Lower leg skin (tissue), 4 donors: ENCODE measurements at regions of chr1 and their contacts with region 1.

Region 1: DNA sequence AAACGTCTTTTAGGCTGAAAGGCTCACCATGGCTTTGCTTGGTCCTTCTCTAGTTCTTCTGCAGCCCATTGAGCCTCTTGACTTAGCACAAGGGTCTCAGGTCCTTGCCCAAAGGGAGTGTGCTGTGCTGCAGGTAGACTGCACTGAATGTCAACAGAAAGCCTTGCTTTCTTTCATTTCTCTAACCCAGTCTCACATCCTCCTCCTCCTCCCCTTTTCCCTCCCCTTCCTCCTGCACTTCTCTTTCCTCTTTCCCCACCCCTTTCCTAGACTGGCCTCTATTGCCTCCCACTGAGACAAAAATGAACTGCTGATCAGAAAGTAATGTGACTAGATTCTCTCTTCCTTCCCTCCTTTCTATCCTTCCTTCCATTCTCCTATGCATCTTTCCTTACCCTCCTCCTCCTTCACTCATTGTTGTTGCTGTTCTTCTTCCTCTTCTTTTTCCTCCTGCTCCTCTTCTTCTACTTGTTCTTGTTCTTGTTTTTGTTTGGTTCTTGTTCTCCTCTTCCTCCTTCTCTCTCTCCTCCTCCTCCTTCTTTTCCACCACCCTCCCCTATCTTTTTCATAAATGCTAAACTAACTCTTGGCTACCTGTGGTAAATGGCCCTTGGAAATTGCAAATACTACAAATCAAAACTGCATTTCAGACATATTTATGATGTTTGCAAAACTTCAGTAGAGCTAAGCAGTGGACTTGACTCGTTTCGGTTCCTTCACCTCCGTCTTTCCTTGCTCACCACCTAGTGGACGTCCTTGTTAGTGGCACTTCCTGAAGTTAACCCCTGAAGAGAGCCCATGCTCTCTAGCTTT is at the start of gene SELL:
- DNase-seq: peak; percentile 41 to 86
- H3K4me3 ChIP-seq: no peak within 1 kb of the TSS
- CTCF ChIP-seq: peak in 1 of 3 donors; percentile 19
- POLR2A ChIP-seq: no peak
- total RNA-seq, gene SELL: 0.10 to 0.36 TPM in 2 of 4 donors, not detected in the others

Region 2: DNA sequence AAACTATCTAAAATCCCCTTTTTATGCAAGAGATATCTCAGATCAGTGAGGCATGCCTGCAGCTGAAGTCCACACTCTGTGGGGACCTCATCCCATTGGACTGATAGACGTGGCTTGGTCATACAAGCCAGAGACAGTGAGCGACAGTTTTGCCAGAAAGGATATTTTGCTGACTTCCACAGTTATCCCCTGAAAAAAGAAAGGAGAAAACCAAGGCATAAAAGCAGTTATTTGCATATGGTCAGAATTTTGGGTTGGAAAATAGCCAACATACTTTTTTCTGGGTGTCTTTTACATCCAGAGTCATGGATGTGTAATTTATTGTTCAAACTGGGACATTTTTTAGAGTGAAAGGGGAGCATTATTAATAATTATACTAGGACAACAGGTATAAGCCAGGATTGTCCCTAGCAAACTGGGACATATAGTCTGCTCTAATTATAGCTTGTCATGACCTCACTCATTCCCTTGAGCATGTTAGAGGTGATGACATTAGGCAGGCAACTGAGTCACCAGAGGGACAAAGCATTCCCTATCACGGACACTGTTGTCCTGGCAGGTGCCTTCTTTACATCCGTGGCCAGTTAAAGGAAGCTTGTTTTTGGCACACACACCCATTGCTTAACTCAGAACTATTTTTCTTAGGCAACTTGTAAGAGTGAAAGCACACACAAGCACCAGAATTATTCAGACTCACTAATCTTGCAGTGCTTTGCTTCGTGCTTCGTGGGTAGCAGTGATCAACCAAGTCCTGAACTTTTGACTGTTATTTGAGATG is 1017.7 kb after region 1 on chr1:
- intact Hi-C with region 1: loop called (anchors 5 kb)
- DNase-seq: no peak
- H3K4me3 ChIP-seq: no peak overlapping the region
- CTCF ChIP-seq: no peak
- POLR2A ChIP-seq: no peak